Natural killer cell (primary cell): ENCODE measurements at regions of chr18 and their contacts with region 1.

Region 1: DNA sequence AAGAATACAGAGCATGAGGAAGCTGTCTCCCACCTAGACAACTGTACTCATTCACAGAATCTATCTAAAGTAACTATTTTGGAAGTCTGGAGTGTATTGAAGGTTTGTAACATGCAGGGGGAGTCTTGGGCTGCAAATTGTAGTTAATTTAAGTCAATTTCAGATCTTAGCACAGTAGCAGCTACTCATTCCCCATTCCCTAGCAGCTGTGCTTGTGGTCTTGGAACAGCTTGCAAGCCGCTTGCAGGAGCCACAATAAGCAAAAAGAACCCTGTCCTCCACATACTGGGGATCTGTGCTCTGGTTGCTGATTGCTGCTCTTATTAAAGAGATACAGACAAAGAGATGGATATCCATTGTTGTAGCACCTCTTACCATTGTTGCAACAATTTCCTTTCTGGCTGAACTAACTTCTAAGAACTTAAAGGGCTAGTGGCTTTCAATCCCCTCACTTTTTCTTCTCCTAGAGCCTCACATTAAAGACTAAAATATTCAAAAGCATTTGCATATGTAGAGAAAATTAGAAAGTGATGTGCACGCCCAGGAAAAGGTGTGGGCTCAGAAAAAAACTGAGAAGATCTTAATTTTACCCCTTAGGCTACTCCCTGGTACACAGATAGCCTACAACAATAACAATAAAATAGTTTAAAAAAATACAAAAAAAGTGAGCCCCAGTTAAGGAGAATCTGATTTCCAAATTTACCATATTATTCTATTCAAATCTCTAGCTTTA is 1775.1 kb upstream of the PIK3C3 start:
- DNase-seq: no peak
- ATAC-seq: no peak
- H3K4me3 ChIP-seq: no peak overlapping the region
- H3K4me3 Mint-ChIP-seq: no peak overlapping the region
- H3K27ac ChIP-seq: no peak overlapping the region
- H3K27ac Mint-ChIP-seq: no peak overlapping the region
- H3K4me1 ChIP-seq: no peaks in the 10 kb centered on the region
- H3K4me1 Mint-ChIP-seq: no peaks in the 10 kb centered on the region
- H3K27me3 ChIP-seq: no peaks in the 10 kb centered on the region
- H3K27me3 Mint-ChIP-seq: no peaks in the 10 kb centered on the region
- CTCF ChIP-seq: no peak

Region 2: DNA sequence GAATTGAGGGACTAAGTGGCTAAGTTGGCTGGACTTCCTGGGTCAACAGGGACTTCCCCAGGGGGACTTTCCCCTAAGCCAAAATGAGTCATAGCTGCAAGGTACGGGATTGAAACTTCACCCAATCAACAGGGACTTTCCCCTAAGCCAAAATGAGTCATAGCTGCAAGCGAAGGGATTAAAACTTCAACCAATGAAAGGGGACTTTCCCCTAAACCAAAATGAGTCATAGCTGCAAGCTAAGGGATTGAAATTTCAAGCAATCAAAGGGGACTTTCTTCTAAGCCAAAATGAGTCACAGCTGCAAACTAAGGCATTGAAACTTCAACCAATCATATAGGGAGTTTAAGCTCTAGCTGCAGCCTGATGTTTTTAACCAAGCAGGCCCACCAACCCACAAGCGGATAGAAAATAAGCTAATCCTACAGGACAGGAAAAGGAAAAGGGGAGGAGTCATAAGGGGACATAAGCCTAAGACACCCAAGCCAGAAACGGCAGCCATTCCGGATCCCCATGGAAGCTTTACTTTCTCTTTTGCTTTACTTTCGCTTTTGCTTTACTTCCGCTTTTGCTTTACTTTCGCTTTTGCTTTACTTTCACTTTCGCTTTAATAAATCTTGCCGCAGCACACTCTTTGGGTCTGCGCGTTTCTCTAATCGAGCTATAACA is 1238.9 kb before region 1 on chr18:
- intact Hi-C with region 1: no loop called
- DNase-seq: peak in 1 of 2 donors; percentile 90
- ATAC-seq: peak; percentile 73 to 76 (median 75)
- H3K4me3 ChIP-seq: peak overlapping the region; percentile 22
- H3K4me3 Mint-ChIP-seq: peak overlapping the region; percentile 61
- H3K27ac ChIP-seq: peak overlapping the region; percentile 85
- H3K27ac Mint-ChIP-seq: peak overlapping the region; percentile 76 to 89
- H3K4me1 ChIP-seq: peaks cover 12% of the 10 kb centered on the region
- H3K4me1 Mint-ChIP-seq: peaks cover 14 to 16% of the 10 kb centered on the region in 2 donors
- H3K27me3 ChIP-seq: no peaks in the 10 kb centered on the region
- H3K27me3 Mint-ChIP-seq: no peaks in the 10 kb centered on the region
- CTCF ChIP-seq: no peak

Region 3: DNA sequence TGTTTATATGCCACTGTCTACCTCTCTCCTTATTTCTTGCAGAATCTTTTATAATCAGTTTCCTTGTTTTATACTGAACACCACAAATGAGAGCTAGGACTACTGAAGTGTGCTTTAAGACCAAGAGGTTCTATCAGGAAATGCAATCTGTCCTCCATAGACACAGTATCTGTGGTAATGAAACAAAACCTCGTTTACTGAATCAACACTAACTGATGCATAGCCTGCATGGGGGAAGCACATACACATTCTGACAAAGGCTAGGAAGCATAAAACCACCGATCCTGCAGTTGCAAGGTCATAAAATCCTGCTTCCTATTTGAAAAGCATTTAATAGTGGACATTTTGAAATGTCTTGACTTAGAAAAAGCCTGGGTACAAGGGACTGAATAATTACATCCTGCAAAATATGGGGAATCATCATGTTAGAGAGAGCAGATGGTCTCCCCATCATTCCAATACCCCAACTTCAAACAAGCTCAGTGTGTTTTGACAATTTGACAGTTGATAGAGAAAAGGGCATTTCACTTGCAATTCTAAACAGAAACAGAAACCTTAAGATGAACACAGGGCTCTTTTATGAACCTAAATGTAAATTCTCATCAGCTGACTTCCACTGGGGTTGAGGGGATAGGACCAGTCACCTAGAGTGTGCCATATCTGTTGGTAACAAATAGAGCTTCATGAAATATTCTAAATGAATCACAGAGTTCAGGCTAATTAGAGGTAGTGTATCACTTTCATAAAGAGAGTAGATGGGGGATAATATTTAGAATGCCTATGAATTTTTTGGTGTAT is 70.4 kb before region 1 on chr18:
- intact Hi-C with region 1: loop called (anchors 10 kb)
- DNase-seq: no peak
- ATAC-seq: no peak
- H3K4me3 ChIP-seq: no peak overlapping the region
- H3K4me3 Mint-ChIP-seq: no peak overlapping the region
- H3K27ac ChIP-seq: no peak overlapping the region
- H3K27ac Mint-ChIP-seq: no peak overlapping the region
- H3K4me1 ChIP-seq: no peaks in the 10 kb centered on the region
- H3K4me1 Mint-ChIP-seq: no peaks in the 10 kb centered on the region
- H3K27me3 ChIP-seq: no peaks in the 10 kb centered on the region
- H3K27me3 Mint-ChIP-seq: no peaks in the 10 kb centered on the region
- CTCF ChIP-seq: no peak